ENCODE measurements at regions of chr6 and their contacts with region 1.

Region 1: DNA sequence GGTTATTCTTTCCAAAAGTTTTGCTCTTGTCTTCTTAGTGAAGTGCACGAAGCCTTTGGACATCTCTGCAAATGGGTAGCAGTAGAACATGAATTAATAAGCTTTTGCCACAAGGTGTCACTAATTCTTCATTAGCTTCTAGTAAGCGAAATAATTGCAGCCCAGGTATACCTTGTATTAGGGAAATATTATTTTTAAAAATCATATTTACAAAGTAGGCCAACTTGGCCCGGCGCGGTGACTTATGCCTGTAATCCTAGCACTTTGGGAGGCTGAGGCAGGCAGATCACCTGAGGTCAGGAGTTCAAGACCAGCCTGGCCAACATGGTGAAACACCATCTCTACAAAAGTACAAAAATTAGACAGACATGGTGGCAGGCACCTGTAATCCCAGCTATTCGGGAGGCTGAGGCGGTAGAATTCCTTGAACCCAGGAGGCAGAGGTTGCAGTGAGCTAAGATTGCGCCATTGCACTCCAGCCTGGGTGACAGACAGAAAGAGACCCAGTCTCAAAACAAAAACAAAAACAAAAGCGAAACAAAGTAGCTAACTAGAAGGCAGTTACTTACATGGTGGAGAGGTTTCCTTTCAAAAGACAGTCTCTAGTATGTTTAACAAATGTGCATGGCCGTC is 8.8 kb upstream of the RSPH3 start:
- DNase-seq: no peak
- ATAC-seq: peak in 2 of 4 donors; percentile 54 to 58
- H3K4me3 ChIP-seq: peak overlapping the region in 1 of 12 donors; percentile 27
- H3K27ac ChIP-seq: no peak overlapping the region
- H3K4me1 ChIP-seq: peaks cover 0 to 18% (median 0%) of the 10 kb centered on the region in 12 donors
- H3K27me3 ChIP-seq: no peaks in the 10 kb centered on the region
- CTCF ChIP-seq: peak; percentile 8 to 50 (median 38)
- POLR2A ChIP-seq: no peak

Region 2: GRCh38 chr6:158991017-158991723 is 17.6 kb before region 1 on chr6:
- intact Hi-C with region 1: no loop called
- DNase-seq: no peak
- ATAC-seq: no peak
- H3K4me3 ChIP-seq: no peak overlapping the region
- H3K27ac ChIP-seq: no peak overlapping the region
- H3K4me1 ChIP-seq: peaks cover 0 to 8% (median 0%) of the 10 kb centered on the region in 12 donors
- H3K27me3 ChIP-seq: no peaks in the 10 kb centered on the region
- CTCF ChIP-seq: no peak
- POLR2A ChIP-seq: no peak

Region 3: DNA sequence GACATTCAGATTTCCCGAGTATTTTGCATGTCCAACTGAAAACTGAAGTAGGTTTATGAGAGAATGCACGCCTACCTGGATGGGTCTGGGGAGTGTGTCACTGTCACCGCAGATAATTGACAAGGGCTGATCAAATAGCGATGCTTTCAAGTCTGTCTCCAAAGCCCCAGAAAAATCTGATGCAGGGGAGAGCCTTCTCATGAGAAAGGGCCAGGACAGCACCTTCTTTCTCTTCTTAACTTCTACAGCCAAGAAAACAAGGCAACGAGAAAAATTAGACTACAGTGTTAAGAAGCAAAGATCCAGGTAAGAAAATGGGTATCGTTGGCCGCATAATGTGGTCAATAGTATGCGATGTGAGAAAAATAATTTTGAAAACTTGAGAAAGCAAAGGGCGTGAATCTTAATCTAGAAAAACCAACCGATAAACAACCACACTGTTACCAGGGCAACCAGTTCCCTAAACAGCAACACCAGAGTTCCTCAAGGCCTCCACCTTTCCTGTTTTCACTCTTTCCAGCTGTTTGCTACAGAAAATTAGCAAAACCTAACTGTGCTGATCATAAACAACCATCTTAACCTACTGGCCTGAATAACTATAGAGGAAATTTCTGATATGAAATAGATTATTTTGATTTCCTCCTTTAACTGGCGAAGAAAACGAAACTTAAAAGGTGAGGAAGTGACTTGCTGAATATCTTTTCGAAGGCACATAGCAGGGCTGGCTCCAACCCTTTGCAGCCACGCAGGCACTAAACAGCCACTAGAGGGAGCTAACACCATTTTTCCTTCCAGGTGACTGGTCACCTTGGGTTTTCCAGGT is 33.4 kb after region 1 on chr6:
- intact Hi-C with region 1: loop called in 1 of 10 experiments (anchors 5 kb)
- DNase-seq: peak in 4 of 5 donors; percentile 44 to 68 (median 53)
- ATAC-seq: peak; percentile 58 to 82 (median 78)
- H3K4me3 ChIP-seq: peak overlapping the region in 6 of 12 donors; percentile 29 to 70 (median 42)
- H3K27ac ChIP-seq: peak overlapping the region in 7 of 12 donors; percentile 9 to 90 (median 36)
- H3K4me1 ChIP-seq: peaks cover 0 to 70% (median 8%) of the 10 kb centered on the region in 12 donors
- H3K27me3 ChIP-seq: peaks cover 0 to 5% (median 0%) of the 10 kb centered on the region in 9 donors
- CTCF ChIP-seq: peak; percentile 81 to 98 (median 91)
- POLR2A ChIP-seq: no peak

Region 4: DNA sequence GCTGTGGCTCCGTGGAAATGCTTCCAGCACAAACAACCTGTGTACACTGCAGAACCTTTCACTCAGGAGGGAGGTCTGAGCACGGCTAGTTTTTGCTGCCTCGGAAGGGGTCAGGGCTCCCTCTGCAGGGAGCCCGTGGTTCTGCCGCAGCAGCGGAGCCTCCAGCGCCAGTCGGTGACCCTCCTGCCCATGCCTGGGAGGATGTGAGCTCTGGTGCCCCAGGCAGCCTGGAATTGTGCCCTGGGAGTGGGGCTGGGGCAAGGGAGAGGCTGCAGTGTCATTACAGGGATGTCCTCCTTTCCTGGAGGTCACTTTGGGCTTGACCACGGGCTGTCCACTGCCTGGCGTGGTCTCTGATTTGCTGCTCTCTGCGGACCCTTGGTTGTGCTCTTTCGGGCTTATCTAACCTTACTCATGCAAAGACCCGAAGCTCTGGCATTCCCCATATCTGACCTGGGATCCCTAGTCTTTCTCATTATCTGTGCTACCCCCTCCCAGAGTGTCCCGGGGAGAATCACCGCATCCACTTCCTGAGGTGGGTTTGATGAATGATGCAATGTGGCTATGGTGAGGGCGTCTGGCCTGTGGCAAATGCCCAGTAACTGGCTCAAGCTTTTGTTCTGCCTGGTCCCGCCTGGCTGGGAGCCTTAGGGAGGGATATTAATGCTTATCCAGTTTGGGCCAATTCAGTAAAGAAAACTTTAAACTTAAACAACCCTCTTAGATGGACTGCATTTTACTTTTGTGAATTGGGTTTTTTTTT is 95.6 kb after region 1 on chr6:
- intact Hi-C with region 1: loop called in 5 of 10 experiments (anchors 5 to 10 kb)
- DNase-seq: peak; percentile 50 to 85 (median 62)
- ATAC-seq: peak; percentile 67 to 94 (median 90)
- H3K4me3 ChIP-seq: no peak overlapping the region
- H3K27ac ChIP-seq: no peak overlapping the region
- H3K4me1 ChIP-seq: peaks cover 0 to 47% (median 5%) of the 10 kb centered on the region in 12 donors
- H3K27me3 ChIP-seq: peaks cover 0 to 9% (median 0%) of the 10 kb centered on the region in 9 donors
- CTCF ChIP-seq: peak; percentile 63 to 83 (median 76)
- POLR2A ChIP-seq: no peak

Region 5: GRCh38 chr6:159134701-159135364 is 126.1 kb after region 1 on chr6:
- intact Hi-C with region 1: loop called (anchors 1 to 10 kb)
- DNase-seq: peak in 4 of 5 donors; percentile 45 to 62 (median 56)
- ATAC-seq: peak; percentile 41 to 77 (median 74)
- H3K4me3 ChIP-seq: no peak overlapping the region
- H3K27ac ChIP-seq: no peak overlapping the region
- H3K4me1 ChIP-seq: peaks cover 0 to 4% (median 0%) of the 10 kb centered on the region in 12 donors
- H3K27me3 ChIP-seq: peaks cover 0 to 15% (median 0%) of the 10 kb centered on the region in 9 donors
- CTCF ChIP-seq: peak; percentile 79 to 97 (median 86)
- POLR2A ChIP-seq: no peak